Head of caudate nucleus (tissue), 42 donors: ENCODE measurements at regions of chr7 and their contacts with region 1.

Region 1: GRCh38 chr7:81482600-81483186 is 287.2 kb downstream of the HGF start:
- DNase-seq: no peak

Region 2: DNA sequence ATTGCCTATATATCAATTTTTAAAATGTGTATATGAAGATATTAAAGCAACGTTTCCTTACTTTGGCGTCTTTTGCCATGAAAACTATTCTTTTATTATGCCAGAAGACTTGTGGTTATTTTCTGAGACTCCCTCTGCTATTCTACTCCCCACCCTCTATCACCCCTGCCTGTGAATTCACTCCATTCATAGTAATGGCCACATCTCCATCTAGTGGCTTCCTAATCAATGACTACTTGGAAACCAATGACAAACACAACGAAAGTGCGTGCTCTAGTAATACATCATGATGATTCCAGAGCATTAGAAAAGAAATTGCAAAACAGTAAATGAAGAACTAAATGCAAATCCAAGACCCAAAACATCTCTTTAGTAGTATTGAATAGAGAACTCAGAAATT is 473.8 kb after region 1 on chr7:
- intact Hi-C with region 1: loop called (anchors 10 kb)
- DNase-seq: peak in 8 of 42 donors; percentile 4 to 60 (median 22)

Region 3: DNA sequence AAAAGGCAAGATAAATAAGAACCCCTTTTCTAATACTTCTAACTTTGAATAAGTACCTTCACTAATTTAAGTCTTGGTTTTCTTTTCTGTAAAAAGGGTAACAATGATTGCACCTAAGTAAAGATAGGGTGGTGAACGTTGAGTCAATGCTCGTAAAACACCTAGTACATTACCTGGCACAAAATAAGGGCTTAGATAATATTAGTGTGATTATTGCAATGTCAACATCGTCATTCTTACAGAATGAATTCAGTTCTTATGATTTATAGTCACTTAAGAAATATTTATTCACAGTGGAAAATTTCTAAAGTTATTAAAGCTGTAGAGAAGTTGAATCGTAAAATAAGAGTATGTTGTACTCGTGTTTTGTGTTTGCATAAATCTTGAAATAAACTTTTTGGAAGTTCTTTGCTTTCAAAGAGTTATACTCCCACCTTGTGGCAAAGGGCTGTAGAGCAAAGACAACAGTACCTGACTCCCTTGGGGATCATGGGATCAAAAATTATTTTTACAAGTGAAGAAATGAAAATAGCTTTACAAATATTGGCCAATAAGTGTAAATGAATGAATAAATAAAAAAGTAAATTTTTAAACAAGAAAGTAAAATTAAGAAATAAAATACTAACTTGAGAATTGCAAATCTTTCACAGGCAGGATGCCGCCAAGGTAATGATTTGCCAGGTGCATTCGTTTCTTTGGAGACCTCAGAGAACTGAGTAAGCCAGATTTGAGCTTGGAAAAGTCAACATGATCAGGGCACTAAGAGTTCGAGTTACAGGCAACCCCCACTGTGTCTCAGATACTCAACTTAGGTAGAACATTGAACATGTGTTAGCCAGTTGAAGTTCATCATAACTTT is 1246.7 kb after region 1 on chr7:
- intact Hi-C with region 1: loop called (anchors 10 kb)
- DNase-seq: peak in 8 of 42 donors; percentile 3 to 48 (median 10)